ENCODE measurements at regions of chr3 and their contacts with region 1.

Region 1: GRCh38 chr3:28348629-28349483 is at the starts of genes AZI2 and ZCWPW2:
- DNase-seq: peak; percentile 95
- ATAC-seq: peak; percentile 94
- H3K4me3 ChIP-seq: peak within 1 kb of the TSS; percentile 67
- H3K27ac ChIP-seq: peak within 1 kb of the TSS; percentile 92
- H3K4me1 ChIP-seq: no peaks in the 10 kb centered on the region
- H3K27me3 ChIP-seq: no peaks in the 10 kb centered on the region
- CTCF ChIP-seq: peak; percentile 14; the same call in 1 of the 2 replicates
- POLR2A ChIP-seq: peak; percentile 78
- RAD21 ChIP-seq: no peak
- total RNA-seq, gene AZI2: 30.1 and 63.6 TPM in 2 replicates
- total RNA-seq, gene ZCWPW2: 0.18 and 0.56 TPM in 2 replicates

Region 2: DNA sequence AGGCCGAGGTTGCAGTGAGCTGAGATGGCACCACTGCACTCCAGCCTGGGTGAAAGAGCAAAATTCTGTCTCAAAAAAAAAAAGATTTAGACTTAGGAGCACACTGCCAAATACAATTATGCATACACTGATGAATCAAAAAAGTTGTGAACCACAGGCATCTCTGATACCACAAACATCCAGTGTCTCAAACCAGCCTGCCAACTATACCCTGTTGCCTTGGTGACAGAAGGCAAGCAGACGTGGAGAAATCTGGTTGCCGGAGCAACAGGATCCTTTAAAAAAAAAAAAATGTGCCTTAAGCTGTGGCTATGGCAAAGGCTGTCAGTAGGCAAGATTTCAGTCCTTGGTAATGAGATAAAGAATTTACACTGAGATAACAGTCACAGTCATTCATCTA is 1182.0 kb before region 1 on chr3:
- CTCF ChIA-PET with region 1: no interaction called
- POLR2A ChIA-PET with region 1: no interaction called
- dilution Hi-C with region 1: no loop called
- in situ Hi-C with region 1: no loop called
- intact Hi-C with region 1: loop called (anchors 10 kb)
- DNase-seq: peak; percentile 91
- ATAC-seq: peak; percentile 72
- H3K4me3 ChIP-seq: no peak overlapping the region
- H3K27ac ChIP-seq: no peak overlapping the region
- H3K4me1 ChIP-seq: no peaks in the 10 kb centered on the region
- H3K27me3 ChIP-seq: no peaks in the 10 kb centered on the region
- CTCF ChIP-seq: no peak
- POLR2A ChIP-seq: no peak
- RAD21 ChIP-seq: no peak

Measured in IMR-90 (cell line).